HepG2 (cell line): ENCODE measurements at regions of chr20 and their contacts with region 1.

Region 1: GRCh38 chr20:61234803-61235113 is 17.3 kb upstream of the CDH4 start:
- DNase-seq: no peak
- ATAC-seq: no peak
- H3K4me3 ChIP-seq: no peak overlapping the region
- H3K27ac ChIP-seq: no peak overlapping the region
- H3K4me1 ChIP-seq: no peaks in the 10 kb centered on the region
- H3K27me3 ChIP-seq: peaks cover 0 to 6% of the 10 kb centered on the region in 2 experiments; a peak in 1 of 5 replicates
- CTCF ChIP-seq: no peak
- EP300 ChIP-seq: no peak
- POLR2A ChIP-seq: no peak
- RAD21 ChIP-seq: no peak

Region 2: GRCh38 chr20:59611269-59611668 is 1623.5 kb before region 1 on chr20:
- CTCF ChIA-PET with region 1: no interaction called
- POLR2A ChIA-PET with region 1: no interaction called
- in situ Hi-C with region 1: no loop called
- intact Hi-C with region 1: loop called (anchors 10 kb)
- DNase-seq: no peak
- ATAC-seq: no peak
- H3K4me3 ChIP-seq: no peak overlapping the region
- H3K27ac ChIP-seq: no peak overlapping the region
- H3K4me1 ChIP-seq: no peaks in the 10 kb centered on the region
- H3K27me3 ChIP-seq: peaks cover 3 to 46% of the 10 kb centered on the region in 2 experiments
- CTCF ChIP-seq: no peak
- EP300 ChIP-seq: no peak
- POLR2A ChIP-seq: no peak
- RAD21 ChIP-seq: no peak

Region 3: DNA sequence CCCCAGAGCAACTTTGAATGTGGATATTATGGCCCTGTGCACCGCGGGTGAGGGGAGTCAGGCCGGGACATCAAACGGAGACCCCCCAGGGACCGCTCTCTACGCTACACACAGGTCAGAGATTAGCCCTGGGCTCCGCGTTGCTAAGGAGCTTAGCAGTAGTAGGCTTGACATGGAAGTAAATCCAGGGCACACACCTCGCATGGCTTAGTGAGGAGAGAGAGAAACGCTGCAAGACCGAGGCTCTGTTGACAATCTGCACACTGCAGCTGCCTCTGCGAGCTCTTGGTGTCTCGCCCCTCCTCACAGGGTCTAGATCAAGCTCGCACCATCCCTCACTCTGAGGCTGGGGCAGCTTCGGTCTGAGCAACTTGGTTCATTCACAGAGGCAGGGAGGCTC is 98.8 kb before region 1 on chr20:
- CTCF ChIA-PET with region 1: no interaction called
- POLR2A ChIA-PET with region 1: no interaction called
- in situ Hi-C with region 1: no loop called
- intact Hi-C with region 1: no loop called
- DNase-seq: no peak
- ATAC-seq: no peak
- H3K4me3 ChIP-seq: no peak overlapping the region
- H3K27ac ChIP-seq: no peak overlapping the region
- H3K4me1 ChIP-seq: no peaks in the 10 kb centered on the region
- H3K27me3 ChIP-seq: peaks cover 3 to 41% of the 10 kb centered on the region in 2 experiments; a peak in 4 of 5 replicates
- CTCF ChIP-seq: no peak
- EP300 ChIP-seq: no peak
- POLR2A ChIP-seq: no peak
- RAD21 ChIP-seq: no peak

Region 4: GRCh38 chr20:61263084-61263695 is 28.4 kb after region 1 on chr20:
- CTCF ChIA-PET with region 1: no interaction called
- POLR2A ChIA-PET with region 1: no interaction called
- in situ Hi-C with region 1: no loop called
- intact Hi-C with region 1: no loop called
- DNase-seq: no peak
- ATAC-seq: peak; percentile 26; the same call in 2 of the 3 replicates
- H3K4me3 ChIP-seq: no peak overlapping the region
- H3K27ac ChIP-seq: no peak overlapping the region
- H3K4me1 ChIP-seq: no peaks in the 10 kb centered on the region
- H3K27me3 ChIP-seq: peaks cover 12 to 51% of the 10 kb centered on the region in 2 experiments; a peak in 4 of 5 replicates
- CTCF ChIP-seq: peak; percentile 64
- EP300 ChIP-seq: no peak
- POLR2A ChIP-seq: no peak
- RAD21 ChIP-seq: no peak

Region 5: DNA sequence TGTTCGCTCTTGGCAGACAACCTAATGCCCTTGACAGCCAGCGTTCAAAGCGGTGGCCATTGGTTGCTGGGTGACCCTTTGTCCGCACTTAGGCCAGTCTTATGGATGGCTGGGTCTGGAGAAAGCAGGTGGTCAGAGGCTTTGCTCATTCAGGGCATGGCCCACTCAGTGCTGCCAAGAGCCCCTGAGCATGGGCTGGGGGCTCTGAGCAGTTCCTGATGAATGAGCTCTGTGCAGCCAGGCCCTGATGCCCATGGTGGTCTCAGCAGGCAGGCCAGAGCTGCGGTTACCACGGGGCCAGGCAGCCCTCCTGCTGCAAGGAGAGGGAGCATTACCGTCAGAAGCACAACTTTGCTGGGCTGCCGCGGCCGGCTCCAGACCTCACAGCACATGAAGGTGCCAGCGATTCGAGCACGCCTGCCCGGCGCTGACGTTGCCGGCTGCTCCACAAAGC is 53.6 kb after region 1 on chr20:
- CTCF ChIA-PET with region 1: no interaction called
- POLR2A ChIA-PET with region 1: no interaction called
- in situ Hi-C with region 1: no loop called
- intact Hi-C with region 1: no loop called
- DNase-seq: no peak
- ATAC-seq: no peak
- H3K4me3 ChIP-seq: no peak overlapping the region
- H3K27ac ChIP-seq: no peak overlapping the region
- H3K4me1 ChIP-seq: no peaks in the 10 kb centered on the region
- H3K27me3 ChIP-seq: peaks cover 0 to 46% of the 10 kb centered on the region in 2 experiments; a peak in 2 of 5 replicates
- CTCF ChIP-seq: no peak
- EP300 ChIP-seq: no peak
- POLR2A ChIP-seq: no peak
- RAD21 ChIP-seq: no peak